GM12878 (cell line): ENCODE measurements at regions of chr9 and their contacts with region 1.

Region 1: GRCh38 chr9:1869843-1870242 is 145.3 kb upstream of the SMARCA2 start:
- DNase-seq: no peak
- ATAC-seq: peak; percentile 82
- H3K4me3 ChIP-seq: no peak overlapping the region
- H3K27ac ChIP-seq: 0 out of 2 replicates have a peak overlapping the region, but pooled peaks have one; percentile 14
- H3K4me1 ChIP-seq: peaks cover 28% of the 10 kb centered on the region
- H3K27me3 ChIP-seq: no peaks in the 10 kb centered on the region
- CTCF ChIP-seq: peak; percentile 53 to 72 (median 62)
- EP300 ChIP-seq: no peak
- POLR2A ChIP-seq: no peak
- RAD21 ChIP-seq: peak; percentile 91

Region 2: GRCh38 chr9:1726993-1727759 is 142.7 kb before region 1 on chr9:
- CTCF ChIA-PET with region 1: interaction called, 16 read pairs
- POLR2A ChIA-PET with region 1: no interaction called
- RAD21 ChIA-PET with region 1: interaction called, 7 read pairs
- SMC1A ChIA-PET with region 1: interaction called, 11 read pairs
- in situ Hi-C with region 1: no loop called
- intact Hi-C with region 1: loop called (anchors 1 kb)
- DNase-seq: no peak
- ATAC-seq: peak; percentile 87
- H3K4me3 ChIP-seq: no peak overlapping the region
- H3K27ac ChIP-seq: no peak overlapping the region
- H3K4me1 ChIP-seq: peaks cover 6% of the 10 kb centered on the region; the same call in 1 of the 2 replicates
- H3K27me3 ChIP-seq: no peaks in the 10 kb centered on the region
- CTCF ChIP-seq: peak; percentile 26 to 45 (median 38); a peak in 5 of 6 replicates
- EP300 ChIP-seq: no peak
- POLR2A ChIP-seq: no peak
- RAD21 ChIP-seq: peak; percentile 62

Region 3: DNA sequence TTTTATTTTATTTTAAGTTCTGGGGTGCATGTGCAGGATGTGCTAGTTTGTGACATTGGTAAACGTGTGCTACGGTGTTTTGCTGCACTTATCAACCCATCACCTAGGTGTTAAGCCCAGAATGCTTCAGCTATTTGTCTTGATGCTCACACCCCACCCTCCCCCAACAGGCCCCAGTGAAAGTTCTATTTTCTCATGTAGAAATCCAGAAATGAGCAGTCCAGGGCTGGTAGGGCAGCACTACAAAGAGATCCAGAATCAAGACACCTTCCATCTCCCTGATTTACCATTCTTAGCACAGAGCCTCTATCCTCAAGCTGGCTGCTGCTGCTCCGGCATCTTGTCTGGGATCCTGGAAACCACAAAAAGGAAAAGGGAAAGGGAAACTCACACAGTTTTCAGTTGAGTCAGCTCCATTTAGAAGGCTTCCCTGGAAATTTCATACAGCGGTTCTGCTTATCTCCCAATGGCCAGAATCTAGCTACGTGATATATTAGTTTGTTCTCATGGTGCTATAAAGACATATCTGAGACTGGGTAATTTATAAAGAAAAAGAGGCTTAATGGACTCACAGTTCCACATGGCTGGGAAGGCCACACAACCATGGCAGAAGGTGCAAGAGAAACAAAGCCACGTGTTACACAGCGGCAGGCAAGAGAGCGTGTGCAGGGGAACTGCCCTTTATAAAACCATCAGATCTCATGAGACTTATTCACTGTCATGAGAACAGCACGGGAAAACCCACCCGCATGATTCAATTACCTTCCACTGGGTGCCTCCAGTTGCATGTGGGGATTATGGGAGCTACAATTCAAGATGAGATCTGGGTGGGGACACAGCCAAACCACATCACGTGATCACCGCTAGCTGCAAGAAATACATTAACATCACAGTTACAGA is 60.1 kb after region 1 on chr9:
- CTCF ChIA-PET with region 1: interaction called, 14 read pairs
- POLR2A ChIA-PET with region 1: interaction called, 3 read pairs
- RAD21 ChIA-PET with region 1: interaction called, 40 read pairs
- SMC1A ChIA-PET with region 1: interaction called, 55 read pairs
- in situ Hi-C with region 1: loop called (anchors 5 kb)
- intact Hi-C with region 1: no loop called
- DNase-seq: peak; percentile 84
- ATAC-seq: peak; percentile 87
- H3K4me3 ChIP-seq: peak overlapping the region; percentile 58
- H3K27ac ChIP-seq: peak overlapping the region; percentile 88
- H3K4me1 ChIP-seq: peaks cover 24% of the 10 kb centered on the region
- H3K27me3 ChIP-seq: no peaks in the 10 kb centered on the region
- CTCF ChIP-seq: 0 out of 6 replicates have a peak, but pooled peaks of 1 of the 3 experiments have one; percentile 6
- EP300 ChIP-seq: peak; percentile 39 to 73; a peak in 1 of 4 replicates
- POLR2A ChIP-seq: no peak
- RAD21 ChIP-seq: peak; percentile 44

Region 4: DNA sequence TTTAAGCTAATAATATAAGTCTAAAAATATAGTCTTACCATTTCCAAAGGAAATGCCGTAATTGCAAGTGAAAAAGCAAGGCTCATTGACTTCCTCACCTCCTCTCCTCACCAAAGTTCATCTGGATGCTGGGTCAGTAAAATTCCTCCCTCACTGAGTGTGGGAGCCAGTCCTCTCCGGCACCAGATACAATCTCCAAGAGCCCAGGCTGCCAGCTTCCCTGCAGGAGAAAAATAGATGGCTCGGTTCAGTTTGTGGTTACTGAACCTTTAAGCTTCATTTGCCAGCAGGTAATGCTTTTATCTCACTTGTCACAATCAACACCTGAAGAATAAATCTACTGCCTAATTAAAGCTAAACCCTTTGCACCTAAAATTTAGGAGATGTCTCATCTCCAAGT is 636.5 kb after region 1 on chr9:
- CTCF ChIA-PET with region 1: no interaction called
- POLR2A ChIA-PET with region 1: no interaction called
- RAD21 ChIA-PET with region 1: no interaction called
- SMC1A ChIA-PET with region 1: no interaction called
- in situ Hi-C with region 1: no loop called
- intact Hi-C with region 1: no loop called
- DNase-seq: no peak
- ATAC-seq: no peak
- H3K4me3 ChIP-seq: no peak overlapping the region
- H3K27ac ChIP-seq: no peak overlapping the region
- H3K4me1 ChIP-seq: no peaks in the 10 kb centered on the region
- H3K27me3 ChIP-seq: no peaks in the 10 kb centered on the region; a peak in 1 of 4 replicates
- CTCF ChIP-seq: no peak
- EP300 ChIP-seq: no peak
- POLR2A ChIP-seq: no peak
- RAD21 ChIP-seq: no peak